Left ventricle myocardium superior (tissue), 1 donor: ENCODE measurements at regions of chr18 and their contacts with region 1.

Region 1: DNA sequence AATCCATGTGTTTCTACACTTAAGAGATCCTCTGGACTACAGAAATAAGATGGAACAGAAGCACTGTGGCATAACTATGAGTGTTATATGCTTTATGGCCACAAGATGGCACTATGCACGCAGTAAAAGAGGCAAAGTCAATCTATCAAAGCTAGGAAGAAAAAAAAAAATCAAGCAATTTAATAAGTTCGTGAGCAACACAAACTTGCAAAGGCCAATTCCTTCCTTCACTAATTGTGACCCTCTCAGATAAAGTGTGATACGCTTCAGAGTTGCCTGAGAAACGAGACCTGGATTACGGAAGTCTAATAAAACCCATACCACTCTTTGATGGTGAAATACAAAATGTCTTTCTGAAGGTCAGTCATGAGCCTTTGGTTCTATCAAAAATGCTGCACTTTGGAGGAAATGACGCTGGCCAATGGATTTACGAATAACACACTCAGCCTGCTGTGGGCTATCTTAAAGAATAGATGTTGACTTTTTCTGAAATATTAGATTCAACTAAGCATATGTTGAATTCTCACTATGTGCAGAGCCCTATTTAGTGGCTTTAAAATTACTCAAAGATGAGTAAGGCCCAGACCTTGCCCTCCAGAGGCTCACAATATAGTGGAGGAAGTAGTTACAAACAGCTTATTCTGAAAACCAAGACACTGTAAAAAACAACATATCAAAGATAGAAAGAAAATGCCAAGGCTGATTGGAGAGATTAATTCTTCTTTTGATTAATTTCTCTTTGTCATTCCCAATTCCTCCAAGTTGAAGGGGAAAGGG is 35.5 kb upstream of the TTR start:
- DNase-seq: no peak
- ATAC-seq: peak; percentile 61

Region 2: GRCh38 chr18:31701744-31702143 is 145.6 kb after region 1 on chr18:
- intact Hi-C with region 1: no loop called
- DNase-seq: no peak
- ATAC-seq: no peak

Region 3: GRCh38 chr18:31722369-31722957 is 166.3 kb after region 1 on chr18:
- intact Hi-C with region 1: loop called (anchors 5 kb)
- DNase-seq: peak; percentile 70
- ATAC-seq: peak; percentile 87

Region 4: DNA sequence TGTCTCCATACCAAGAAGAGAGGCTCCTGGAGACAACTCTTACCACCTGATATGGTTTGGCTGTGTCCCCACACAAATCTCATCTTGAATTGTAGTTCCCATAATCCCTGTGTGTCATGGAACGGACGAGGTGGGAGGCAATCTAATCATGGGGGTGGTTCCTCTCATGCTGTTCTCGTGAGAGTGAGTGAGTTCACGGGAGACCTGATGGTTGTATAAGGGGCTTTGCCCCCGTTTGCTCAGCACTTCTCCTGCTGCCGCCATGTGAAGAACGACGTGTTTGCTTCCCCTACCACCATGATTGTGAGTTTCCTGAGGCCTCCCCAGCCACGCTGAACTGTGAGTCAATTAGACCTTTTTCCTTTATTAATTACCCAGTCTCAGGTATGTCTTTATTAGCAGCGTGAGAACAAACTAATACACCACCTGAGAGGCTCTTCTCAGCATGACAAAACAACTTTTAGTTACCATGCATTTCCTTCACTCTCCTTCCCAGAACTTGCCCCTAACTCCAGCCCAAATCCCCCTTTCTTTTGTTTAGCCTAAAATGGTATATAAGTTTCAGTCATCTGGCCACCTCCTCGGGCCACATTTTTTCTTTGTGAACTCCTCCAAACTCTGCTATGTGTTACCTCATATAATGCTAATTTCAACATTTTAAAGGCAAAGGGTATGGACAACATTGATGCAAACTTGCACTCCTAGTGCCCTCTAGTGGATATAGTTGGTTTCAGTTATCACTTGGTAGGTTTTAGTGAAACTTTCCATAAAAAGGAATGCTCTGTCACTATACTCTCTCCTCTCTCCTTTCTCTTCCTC is 263.2 kb after region 1 on chr18:
- intact Hi-C with region 1: loop called (anchors 5 kb)
- DNase-seq: no peak
- ATAC-seq: no peak

Region 5: GRCh38 chr18:31977270-31977872 is 421.2 kb after region 1 on chr18:
- intact Hi-C with region 1: loop called (anchors 5 kb)
- DNase-seq: no peak
- ATAC-seq: peak; percentile 62